Gastrocnemius medialis (tissue), 4 donors: ENCODE measurements at regions of chr22 and their contacts with region 1.

Region 1: GRCh38 chr22:22848364-22848866 is 39.2 kb upstream of the IGLL5 start:
- DNase-seq: peak in 1 of 2 donors; percentile 9
- ATAC-seq: peak; percentile 52 to 56
- H3K4me3 ChIP-seq: no peak overlapping the region
- H3K27ac ChIP-seq: no peak overlapping the region
- H3K4me1 ChIP-seq: no peaks in the 10 kb centered on the region
- H3K27me3 ChIP-seq: peaks cover 0 to 4% (median 0%) of the 10 kb centered on the region in 3 donors
- CTCF ChIP-seq: peak; percentile 49 to 79 (median 68)
- POLR2A ChIP-seq: no peak

Region 2: GRCh38 chr22:23144932-23145873 is 296.8 kb after region 1 on chr22 and contains the start of gene RAB36:
- in situ Hi-C with region 1: loop called in 1 of 4 experiments (anchors 25 kb)
- intact Hi-C with region 1: no loop called
- DNase-seq: peak; percentile 74 to 78
- ATAC-seq: peak; percentile 55
- H3K4me3 ChIP-seq: peak within 1 kb of the TSS; percentile 22 to 48 (median 44)
- H3K27ac ChIP-seq: peak within 1 kb of the TSS in 3 of 4 donors; percentile 2 to 38 (median 16)
- H3K4me1 ChIP-seq: peaks cover 8 to 10% of the 10 kb centered on the region in 2 donors
- H3K27me3 ChIP-seq: peaks cover 8 to 15% (median 8%) of the 10 kb centered on the region in 3 donors
- CTCF ChIP-seq: no peak
- POLR2A ChIP-seq: no peak
- total RNA-seq, gene RAB36: 0.35 to 0.55 TPM in 2 of 4 donors, not detected in the others